Panc1 (cell line): ENCODE measurements at regions of chr14 and their contacts with region 1.

Region 1: GRCh38 chr14:69580009-69580577 is 5.4 kb upstream of the CCDC177 start:
- DNase-seq: peak; percentile 13
- ATAC-seq: peak; percentile 80
- H3K4me3 ChIP-seq: no peak overlapping the region
- H3K27ac ChIP-seq: no peak overlapping the region
- H3K4me1 ChIP-seq: no peaks in the 10 kb centered on the region
- H3K27me3 ChIP-seq: 0 out of 2 replicates have a peak, but pooled peaks cover 2% of the 10 kb centered on the region
- CTCF ChIP-seq: peak; percentile 65

Region 2: GRCh38 chr14:69695322-69696203 is 115.5 kb after region 1 on chr14:
- CTCF ChIA-PET with region 1: no interaction called
- POLR2A ChIA-PET with region 1: no interaction called
- in situ Hi-C with region 1: no loop called
- intact Hi-C with region 1: no loop called
- DNase-seq: no peak
- ATAC-seq: no peak
- H3K4me3 ChIP-seq: no peak overlapping the region
- H3K27ac ChIP-seq: no peak overlapping the region
- H3K4me1 ChIP-seq: no peaks in the 10 kb centered on the region
- H3K27me3 ChIP-seq: no peaks in the 10 kb centered on the region
- CTCF ChIP-seq: no peak

Region 3: DNA sequence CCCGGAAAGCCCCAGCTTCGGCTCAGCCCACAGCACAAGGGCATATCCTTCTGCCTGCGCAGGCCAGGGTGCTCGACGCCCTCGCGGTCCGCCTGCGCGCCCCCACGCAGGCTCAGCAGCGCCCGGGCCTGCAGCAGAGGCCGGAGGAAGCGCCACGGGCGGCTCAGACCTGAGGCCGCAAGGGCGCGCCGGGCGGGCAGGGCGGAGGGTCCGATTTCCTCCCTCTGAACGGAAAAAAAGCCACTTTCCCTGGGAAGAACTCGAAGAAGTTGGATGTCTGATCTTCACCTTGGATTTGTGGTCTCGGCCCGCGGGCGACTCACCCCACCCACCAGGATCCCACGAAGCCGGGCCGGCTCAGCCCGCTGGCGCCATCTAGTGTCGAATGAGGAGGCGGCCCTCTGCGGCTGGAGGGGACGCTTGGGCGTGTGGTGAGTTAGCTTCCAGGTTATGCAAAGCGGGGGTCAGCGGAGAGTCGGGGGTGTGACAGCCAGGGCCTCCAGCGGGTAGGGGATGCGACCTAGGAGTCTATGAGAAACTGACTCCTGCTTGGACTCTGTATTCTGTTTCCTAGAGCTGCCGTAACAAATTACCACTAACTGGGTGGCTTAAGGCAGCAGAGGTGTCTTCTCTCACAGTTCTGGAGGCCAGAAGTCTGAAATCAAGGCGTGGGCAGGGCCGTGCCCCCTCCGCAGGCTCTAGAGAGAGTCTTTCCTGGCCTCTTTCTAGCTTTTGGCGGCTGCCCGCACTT is 146.8 kb after region 1 on chr14:
- CTCF ChIA-PET with region 1: interaction called, 4 read pairs
- POLR2A ChIA-PET with region 1: no interaction called
- in situ Hi-C with region 1: no loop called
- intact Hi-C with region 1: loop called (anchors 1 kb)
- DNase-seq: peak; percentile 28
- ATAC-seq: peak; percentile 97
- H3K4me3 ChIP-seq: peak overlapping the region; percentile 35 to 46
- H3K27ac ChIP-seq: no peak overlapping the region
- H3K4me1 ChIP-seq: no peaks in the 10 kb centered on the region
- H3K27me3 ChIP-seq: no peaks in the 10 kb centered on the region
- CTCF ChIP-seq: peak; percentile 94